ENCODE measurements at regions of chr2 and their contacts with region 1.

Region 1: DNA sequence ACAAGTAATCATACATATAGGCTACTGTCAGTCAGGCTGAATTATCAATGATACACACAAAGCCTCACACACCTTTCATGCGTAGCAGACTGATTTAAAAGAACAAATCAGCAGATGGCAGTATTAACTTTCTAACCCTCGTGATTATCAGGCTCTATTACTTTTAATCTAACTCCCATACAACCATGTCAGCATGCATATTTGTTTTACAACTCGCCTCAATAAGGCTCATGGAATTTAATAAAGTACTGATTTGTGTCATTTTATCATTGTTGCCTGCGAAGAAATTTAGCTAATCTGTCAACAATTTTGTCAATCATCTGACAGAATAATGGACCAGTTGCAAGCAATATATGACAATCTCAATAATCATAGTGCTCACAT is 82.8 kb downstream of the SLC25A12 start:
- DNase-seq: peak; percentile 20
- H3K4me3 ChIP-seq: no peak overlapping the region
- H3K27ac ChIP-seq: no peak overlapping the region
- H3K4me1 ChIP-seq: peaks cover 15% of the 10 kb centered on the region
- H3K27me3 ChIP-seq: no peaks in the 10 kb centered on the region
- CTCF ChIP-seq: peak; percentile 32 to 46

Region 2: GRCh38 chr2:171482877-171483276 is 328.4 kb before region 1 on chr2:
- CTCF ChIA-PET with region 1: no interaction called
- dilution Hi-C with region 1: no loop called
- in situ Hi-C with region 1: no loop called
- intact Hi-C with region 1: no loop called
- DNase-seq: no peak
- H3K4me3 ChIP-seq: no peak overlapping the region
- H3K27ac ChIP-seq: no peak overlapping the region
- H3K4me1 ChIP-seq: no peaks in the 10 kb centered on the region
- H3K27me3 ChIP-seq: no peaks in the 10 kb centered on the region
- CTCF ChIP-seq: no peak

Region 3: DNA sequence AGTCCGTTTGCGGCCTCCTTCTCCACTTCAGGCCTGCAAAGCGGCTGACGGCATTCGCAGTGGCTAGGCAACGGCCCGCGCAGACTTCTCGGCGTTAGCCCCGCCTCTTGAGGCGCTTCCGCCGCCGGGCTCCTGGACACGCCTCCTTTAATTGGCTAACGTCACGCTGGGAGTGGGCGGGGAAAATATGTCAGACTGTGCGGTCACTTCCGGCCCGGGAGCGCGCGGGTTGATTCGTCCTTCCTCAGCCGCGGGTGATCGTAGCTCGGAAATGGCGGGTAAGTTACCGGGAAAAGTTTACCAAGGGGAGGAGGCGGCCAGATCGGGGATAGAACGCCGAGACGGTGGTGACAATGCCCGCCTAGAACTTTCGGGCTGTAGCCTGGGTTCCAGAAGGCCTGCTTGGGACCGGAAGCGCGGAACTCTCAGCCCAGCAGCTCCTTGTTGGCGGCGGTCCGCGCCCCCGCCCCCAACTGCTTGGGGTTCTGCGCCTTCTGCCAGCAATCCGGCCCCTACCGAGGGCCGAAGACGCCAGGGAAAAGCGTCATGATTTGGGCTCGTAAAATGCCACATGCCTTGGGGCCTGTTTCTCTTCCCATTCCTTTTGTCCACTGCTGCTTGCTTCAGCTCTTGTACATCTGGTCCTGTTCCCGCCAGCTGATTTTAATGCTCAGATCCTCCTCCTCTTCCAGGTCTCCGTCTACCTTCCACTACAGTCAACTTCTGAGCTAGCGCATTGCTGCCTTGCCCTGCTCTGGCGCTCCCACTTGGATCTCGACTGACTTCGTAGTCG is 111.2 kb after region 1 on chr2 and contains the start of gene HAT1:
- CTCF ChIA-PET with region 1: no interaction called
- dilution Hi-C with region 1: no loop called
- in situ Hi-C with region 1: no loop called
- intact Hi-C with region 1: loop called (anchors 2 kb)
- DNase-seq: peak; percentile 96
- H3K4me3 ChIP-seq: peak within 1 kb of the TSS; percentile 72 to 77 (median 73)
- H3K27ac ChIP-seq: peak within 1 kb of the TSS; percentile 88
- H3K4me1 ChIP-seq: no peaks in the 10 kb centered on the region
- H3K27me3 ChIP-seq: no peaks in the 10 kb centered on the region
- CTCF ChIP-seq: no peak
- total RNA-seq, gene HAT1: 30.8 to 56.3 TPM

Region 4: GRCh38 chr2:171957061-171957460 is 145.8 kb after region 1 on chr2:
- CTCF ChIA-PET with region 1: no interaction called
- dilution Hi-C with region 1: no loop called
- in situ Hi-C with region 1: no loop called
- intact Hi-C with region 1: loop called (anchors 2 kb)
- DNase-seq: peak; percentile 14
- H3K4me3 ChIP-seq: no peak overlapping the region
- H3K27ac ChIP-seq: no peak overlapping the region
- H3K4me1 ChIP-seq: peaks cover 10% of the 10 kb centered on the region
- H3K27me3 ChIP-seq: no peaks in the 10 kb centered on the region
- CTCF ChIP-seq: peak in 1 of 2 donors; percentile 45

Region 5: GRCh38 chr2:172131713-172132555 is 320.7 kb after region 1 on chr2:
- CTCF ChIA-PET with region 1: no interaction called
- dilution Hi-C with region 1: no loop called
- in situ Hi-C with region 1: no loop called
- intact Hi-C with region 1: loop called (anchors 2 kb)
- DNase-seq: no peak
- H3K4me3 ChIP-seq: no peak overlapping the region
- H3K27ac ChIP-seq: no peak overlapping the region
- H3K4me1 ChIP-seq: no peaks in the 10 kb centered on the region
- H3K27me3 ChIP-seq: no peaks in the 10 kb centered on the region
- CTCF ChIP-seq: no peak

Region 6: DNA sequence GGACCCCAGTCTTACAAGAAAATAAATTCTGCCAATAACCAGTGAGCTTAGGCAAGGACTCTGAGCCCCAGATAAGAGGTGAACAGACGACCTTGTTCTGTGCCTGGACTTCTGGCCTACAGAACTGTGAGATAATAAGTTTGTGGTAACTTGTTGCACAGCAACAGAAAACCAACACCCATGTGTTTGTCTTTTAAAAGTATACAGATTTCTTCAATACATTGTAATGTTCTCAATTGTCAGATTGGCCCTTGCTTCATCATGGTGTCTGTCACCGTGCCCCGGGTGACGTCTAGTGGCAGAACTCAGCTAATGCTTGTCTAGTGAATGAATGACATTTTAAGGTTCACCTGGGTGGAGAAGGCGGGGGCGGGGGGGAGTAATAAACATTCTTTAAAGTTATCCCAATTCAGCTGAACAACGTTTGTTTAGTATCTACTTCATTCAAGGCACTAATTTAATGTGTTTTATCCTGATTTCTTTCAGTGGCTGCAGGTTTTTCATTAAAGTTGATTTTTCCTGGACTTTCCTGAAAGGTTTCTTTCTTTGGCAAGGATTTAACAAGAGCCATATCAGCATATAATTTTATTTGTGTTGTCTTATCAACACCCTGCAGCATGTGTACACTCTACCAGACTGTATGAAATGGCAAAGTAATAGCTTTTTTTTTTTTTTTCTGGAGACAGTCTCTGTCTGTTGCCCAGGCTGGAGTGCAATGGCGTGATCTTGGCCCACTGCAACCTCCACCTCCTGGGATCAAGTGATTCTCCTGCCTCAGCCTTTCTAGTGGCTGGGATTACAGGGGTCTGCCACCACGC is 415.2 kb after region 1 on chr2:
- CTCF ChIA-PET with region 1: no interaction called
- dilution Hi-C with region 1: no loop called
- in situ Hi-C with region 1: no loop called
- intact Hi-C with region 1: loop called (anchors 5 kb)
- DNase-seq: peak; percentile 56
- H3K4me3 ChIP-seq: no peak overlapping the region
- H3K27ac ChIP-seq: peak overlapping the region; percentile 63
- H3K4me1 ChIP-seq: peaks cover 52% of the 10 kb centered on the region
- H3K27me3 ChIP-seq: no peaks in the 10 kb centered on the region
- CTCF ChIP-seq: peak; percentile 72 to 78

Measured in mammary epithelial cell (primary cell).